Activated CD8-positive, alpha-beta T cell treated with anti-CD3 and anti-CD28 coated beads, Interleukin-2, amount 10 ng/mL, durations not matched to agents 7 days and 5 days (primary cell): ENCODE measurements at regions of chr2 and their contacts with region 1.

Region 1: GRCh38 chr2:148989882-148990493 is 48.5 kb upstream of the LYPD6B start:
- DNase-seq: peak; percentile 70
- ATAC-seq: peak; percentile 82
- H3K4me3 Mint-ChIP-seq: no peak overlapping the region
- H3K27ac Mint-ChIP-seq: no peak overlapping the region
- H3K4me1 Mint-ChIP-seq: no peaks in the 10 kb centered on the region
- H3K27me3 Mint-ChIP-seq: no peaks in the 10 kb centered on the region

Region 2: GRCh38 chr2:148926291-148926961 is 63.6 kb before region 1 on chr2:
- CTCF ChIA-PET with region 1: interaction called, 10 read pairs
- POLR2A ChIA-PET with region 1: no interaction called
- DNase-seq: peak; percentile 68
- ATAC-seq: peak; percentile 84
- H3K4me3 Mint-ChIP-seq: peak overlapping the region; percentile 77
- H3K27ac Mint-ChIP-seq: peak overlapping the region; percentile 85
- H3K4me1 Mint-ChIP-seq: peaks cover 21% of the 10 kb centered on the region
- H3K27me3 Mint-ChIP-seq: no peaks in the 10 kb centered on the region